Cardiac septum (tissue), 1 donor: ENCODE measurements at regions of chr11 and their contacts with region 1.

Region 1: DNA sequence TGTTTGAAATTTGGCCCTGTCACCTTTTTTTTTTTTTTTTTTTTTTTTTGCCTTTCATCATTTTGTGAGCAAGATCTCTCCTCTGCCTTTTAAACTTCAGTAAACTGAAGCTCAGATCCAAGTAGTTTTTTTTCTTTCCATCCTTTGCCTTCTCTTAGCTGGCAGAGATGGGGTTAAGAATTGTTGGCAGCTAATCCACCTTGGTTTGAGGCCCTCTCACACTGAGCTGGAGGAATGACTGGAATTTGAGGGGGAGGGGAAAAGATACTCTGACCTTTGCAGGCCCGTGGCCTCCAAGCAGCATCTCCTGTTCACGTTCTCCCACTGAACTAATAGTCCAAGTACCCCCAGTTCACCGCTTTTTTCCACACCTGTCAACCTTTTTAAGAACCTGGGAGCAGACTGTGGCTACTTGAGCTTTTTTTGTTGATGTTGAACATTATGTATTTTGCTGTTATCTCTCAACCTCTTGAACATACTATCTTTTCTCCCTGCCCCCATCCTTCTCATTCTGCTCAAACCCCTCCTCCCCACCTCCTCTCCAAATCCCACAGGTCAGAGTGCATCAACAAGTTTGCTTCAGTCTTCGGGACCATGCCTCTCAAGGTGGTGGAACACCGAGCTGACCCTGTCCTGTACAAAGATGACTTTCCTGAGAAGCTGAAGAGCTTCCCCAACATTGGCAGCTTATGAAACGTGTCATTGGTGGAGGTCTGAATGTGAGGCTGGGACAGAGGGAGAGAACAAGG is 66.2 kb downstream of the ALX4 start:
- DNase-seq: no peak

Region 2: DNA sequence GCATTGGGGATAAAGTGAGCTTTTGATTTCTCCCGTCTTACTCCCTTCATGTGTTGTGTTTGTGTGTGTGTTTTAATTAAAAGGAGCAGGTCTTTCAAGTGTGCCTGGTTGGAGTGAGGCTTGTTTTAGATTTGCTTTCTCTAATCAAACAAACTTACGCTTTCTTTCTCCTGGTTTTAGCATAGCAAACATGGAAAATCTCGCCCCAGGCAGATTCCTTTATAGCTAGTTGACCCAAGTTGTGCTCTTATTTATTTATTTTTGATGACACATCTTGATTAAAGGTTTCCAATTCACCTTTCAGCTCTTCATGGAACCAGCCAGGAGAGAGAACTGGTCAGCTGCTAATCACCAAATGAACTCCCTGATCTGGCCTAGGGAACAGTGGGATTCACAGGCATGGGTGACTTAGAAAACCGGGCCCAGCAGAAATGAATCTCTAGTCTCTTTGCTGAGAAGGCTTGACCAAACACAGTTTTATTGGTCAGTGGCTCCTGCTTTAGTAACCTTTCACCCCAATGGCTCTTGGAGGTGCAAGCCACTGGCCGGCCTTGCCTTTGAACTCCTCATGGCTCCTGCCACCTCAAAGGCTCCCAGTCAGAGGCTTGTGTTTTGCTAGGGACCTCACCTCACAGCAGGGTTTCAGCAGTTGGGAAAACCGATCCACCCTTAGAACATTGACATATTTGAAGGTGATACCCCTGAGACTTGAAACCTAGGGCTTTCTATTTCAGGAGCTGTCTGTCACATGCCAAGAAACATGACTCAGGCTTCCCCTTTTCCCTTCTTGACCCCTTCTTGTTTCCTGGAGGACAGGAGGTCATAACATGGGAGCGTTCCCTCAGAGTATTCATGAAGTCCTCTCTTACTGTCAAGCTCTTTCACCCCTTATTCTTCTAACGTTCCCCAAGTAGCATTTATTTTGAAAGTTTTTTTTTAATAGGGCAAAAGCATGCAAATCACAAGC is 99.5 kb before region 1 on chr11:
- intact Hi-C with region 1: loop called (anchors 5 kb)
- DNase-seq: no peak

Region 3: GRCh38 chr11:44290208-44290607 is 46.4 kb after region 1 on chr11:
- intact Hi-C with region 1: no loop called
- DNase-seq: no peak